Dorsolateral prefrontal cortex (tissue), 120 donors: ENCODE measurements at regions of chr16 and their contacts with region 1.

Region 1: DNA sequence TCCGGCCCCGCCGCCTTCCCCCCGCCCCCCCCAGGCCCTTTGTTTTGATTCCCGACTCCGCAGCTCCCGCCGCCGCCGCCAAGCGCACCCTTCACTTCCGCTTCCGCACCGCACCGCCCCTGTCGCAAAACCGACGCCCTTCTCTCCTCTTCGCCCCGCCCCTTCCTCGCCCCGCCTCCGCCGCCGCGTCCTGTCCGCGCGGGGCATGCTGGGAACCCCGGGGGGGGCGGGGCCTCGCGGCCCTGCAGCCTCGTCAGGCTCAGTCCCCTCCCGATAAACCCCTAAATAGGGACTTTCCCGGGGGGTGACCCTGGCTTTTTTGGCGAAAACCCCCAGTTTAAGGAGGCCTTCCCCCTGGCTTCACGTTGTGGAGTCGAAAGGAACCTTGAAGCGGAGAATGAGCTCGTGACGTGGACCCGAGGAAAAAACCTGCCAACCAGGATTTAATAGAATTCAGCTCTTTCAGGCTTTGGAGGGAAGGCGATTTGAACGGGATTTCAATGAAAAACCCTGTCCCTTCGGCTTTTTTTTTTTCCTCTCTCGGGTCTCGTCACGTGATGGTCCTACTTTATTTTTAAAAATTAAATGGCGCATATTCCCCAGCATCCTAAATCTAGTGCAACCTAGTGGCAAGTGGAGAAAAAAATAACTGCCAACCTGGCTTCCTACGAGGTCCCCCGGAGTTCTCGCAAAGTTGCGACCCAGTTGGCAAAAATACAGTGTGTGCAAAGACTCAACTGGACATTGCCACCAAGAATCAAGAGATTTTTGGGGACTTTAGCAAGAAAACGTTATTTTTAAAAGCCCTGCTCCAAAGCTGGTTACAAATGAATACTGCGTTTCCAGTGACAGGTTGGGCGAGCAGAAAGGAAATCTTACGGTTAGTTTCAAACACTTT is at the start of gene MARF1:
- DNase-seq: peak; percentile 90 to 98 (median 96)
- H3K4me3 ChIP-seq: peak within 1 kb of the TSS; percentile 59 to 100 (median 93)
- H3K27ac ChIP-seq: peak within 1 kb of the TSS; percentile 95 to 100 (median 99)
- H3K27me3 ChIP-seq: no peaks in the 10 kb centered on the region
- CTCF ChIP-seq: peak in 52 of 56 donors; percentile 8 to 60 (median 42)
- total RNA-seq, gene MARF1: 121 to 278 (median 183) TPM

Region 2: GRCh38 chr16:14632692-14633569 is 1010.4 kb before region 1 on chr16 and contains the start of gene BFAR:
- intact Hi-C with region 1: loop called in 1 of 2 experiments (anchors 10 kb)
- DNase-seq: peak; percentile 98 to 100 (median 99)
- H3K4me3 ChIP-seq: peak within 1 kb of the TSS; percentile 76 to 100 (median 96)
- H3K27ac ChIP-seq: peak within 1 kb of the TSS; percentile 10 to 96 (median 89)
- H3K27me3 ChIP-seq: no peaks in the 10 kb centered on the region
- CTCF ChIP-seq: peak in 28 of 56 donors; percentile 7 to 56 (median 26)
- total RNA-seq, gene BFAR: 26.5 to 50.2 (median 36.3) TPM

Region 3: GRCh38 chr16:15434425-15435215 is 208.7 kb before region 1 on chr16 and contains the start of gene BMERB1:
- intact Hi-C with region 1: loop called in 1 of 2 experiments (anchors 10 kb)
- DNase-seq: peak; percentile 70 to 90 (median 78)
- H3K4me3 ChIP-seq: peak within 1 kb of the TSS; percentile 68 to 97 (median 87)
- H3K27ac ChIP-seq: peak within 1 kb of the TSS; percentile 24 to 96 (median 88)
- H3K27me3 ChIP-seq: no peaks in the 10 kb centered on the region
- CTCF ChIP-seq: peak in 26 of 56 donors; percentile 4 to 45 (median 21)
- total RNA-seq, gene BMERB1: 133 to 426 (median 283) TPM

Region 4: GRCh38 chr16:15523092-15523541 is 120.2 kb before region 1 on chr16:
- intact Hi-C with region 1: loop called in 1 of 2 experiments (anchors 10 kb)
- DNase-seq: peak; percentile 11 to 73 (median 58)
- H3K4me3 ChIP-seq: peak overlapping the region in 1 of 59 donors; percentile 3
- H3K27ac ChIP-seq: peak overlapping the region in 45 of 59 donors; percentile 2 to 80 (median 43)
- H3K27me3 ChIP-seq: no peaks in the 10 kb centered on the region
- CTCF ChIP-seq: peak in 54 of 56 donors; percentile 23 to 78 (median 54)

Region 5: DNA sequence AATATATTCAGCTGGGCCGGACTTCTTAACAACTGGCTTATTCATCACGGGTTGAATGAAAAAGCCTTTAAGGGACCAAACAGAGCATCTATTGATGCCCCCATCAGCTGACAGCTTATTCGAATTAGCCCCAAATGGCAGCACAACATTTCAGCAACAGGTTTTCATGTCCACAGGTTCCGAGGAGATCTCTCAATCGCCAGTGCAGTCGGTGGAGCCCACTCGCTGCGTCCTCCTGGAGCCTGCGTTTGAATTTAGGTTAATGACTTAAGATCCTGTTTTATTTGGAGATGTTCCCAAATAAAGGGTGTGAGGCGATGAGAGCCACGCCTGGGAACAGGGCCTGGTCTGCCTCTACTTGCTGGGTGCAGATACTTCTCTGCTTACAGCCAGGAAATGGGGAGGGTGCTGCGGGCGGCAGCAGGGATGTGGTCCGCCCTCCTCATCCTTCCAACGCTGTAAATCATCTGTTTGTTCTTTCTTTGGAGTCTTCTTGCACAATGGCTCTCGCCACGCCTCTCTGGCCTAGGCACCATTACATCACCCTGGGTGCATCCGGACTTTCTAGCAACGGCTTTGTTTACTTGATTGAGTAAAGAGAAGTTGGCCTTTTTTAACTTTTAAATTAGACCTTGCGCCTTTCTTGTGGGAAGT is 29.3 kb after region 1 on chr16:
- intact Hi-C with region 1: loop called in 1 of 2 experiments (anchors 1 kb)
- DNase-seq: peak; percentile 7 to 91 (median 78)
- H3K4me3 ChIP-seq: peak overlapping the region in 54 of 59 donors; percentile 4 to 55 (median 28)
- H3K27ac ChIP-seq: peak overlapping the region; percentile 81 to 100 (median 98)
- H3K27me3 ChIP-seq: no peaks in the 10 kb centered on the region
- CTCF ChIP-seq: peak in 8 of 56 donors; percentile 7 to 32 (median 12)

Region 6: DNA sequence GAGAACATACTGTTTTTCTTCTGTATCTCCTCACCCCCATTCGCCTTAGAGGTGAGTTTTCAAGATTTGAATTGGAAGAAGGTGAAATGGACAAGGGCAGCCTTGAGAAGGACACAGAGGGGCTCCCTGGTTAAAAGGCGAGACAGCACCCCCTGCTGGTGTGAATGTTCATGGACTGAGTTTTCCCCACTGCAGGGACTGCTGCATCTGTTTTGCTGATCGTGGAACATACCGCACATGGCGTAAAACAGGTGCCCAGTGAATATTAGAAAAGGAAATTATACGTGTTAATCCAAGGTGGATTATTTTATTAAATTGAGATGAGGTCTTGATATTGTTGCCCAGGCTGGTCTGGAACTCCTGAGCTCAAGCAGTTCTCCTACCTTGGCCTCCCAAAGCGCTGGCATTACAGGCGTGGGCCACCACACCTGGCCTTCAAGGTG is 61.3 kb after region 1 on chr16:
- intact Hi-C with region 1: loop called (anchors 2 to 5 kb)
- DNase-seq: peak; percentile 60 to 89 (median 79)
- H3K4me3 ChIP-seq: no peak overlapping the region
- H3K27ac ChIP-seq: peak overlapping the region in 35 of 59 donors; percentile 4 to 78 (median 44)
- H3K27me3 ChIP-seq: no peaks in the 10 kb centered on the region
- CTCF ChIP-seq: peak; percentile 74 to 95 (median 88)

Region 7: GRCh38 chr16:15726715-15727114 is 83.4 kb after region 1 on chr16:
- intact Hi-C with region 1: no loop called
- DNase-seq: no peak
- H3K4me3 ChIP-seq: no peak overlapping the region
- H3K27ac ChIP-seq: no peak overlapping the region
- H3K27me3 ChIP-seq: no peaks in the 10 kb centered on the region
- CTCF ChIP-seq: no peak

Region 8: GRCh38 chr16:16127469-16128116 is 484.3 kb after region 1 on chr16:
- intact Hi-C with region 1: no loop called
- DNase-seq: peak; percentile 51 to 77 (median 63)
- H3K4me3 ChIP-seq: no peak overlapping the region
- H3K27ac ChIP-seq: no peak overlapping the region
- H3K27me3 ChIP-seq: no peaks in the 10 kb centered on the region
- CTCF ChIP-seq: peak; percentile 57 to 87 (median 80)